ENCODE measurements at regions of chr9 and their contacts with region 1.

Region 1: DNA sequence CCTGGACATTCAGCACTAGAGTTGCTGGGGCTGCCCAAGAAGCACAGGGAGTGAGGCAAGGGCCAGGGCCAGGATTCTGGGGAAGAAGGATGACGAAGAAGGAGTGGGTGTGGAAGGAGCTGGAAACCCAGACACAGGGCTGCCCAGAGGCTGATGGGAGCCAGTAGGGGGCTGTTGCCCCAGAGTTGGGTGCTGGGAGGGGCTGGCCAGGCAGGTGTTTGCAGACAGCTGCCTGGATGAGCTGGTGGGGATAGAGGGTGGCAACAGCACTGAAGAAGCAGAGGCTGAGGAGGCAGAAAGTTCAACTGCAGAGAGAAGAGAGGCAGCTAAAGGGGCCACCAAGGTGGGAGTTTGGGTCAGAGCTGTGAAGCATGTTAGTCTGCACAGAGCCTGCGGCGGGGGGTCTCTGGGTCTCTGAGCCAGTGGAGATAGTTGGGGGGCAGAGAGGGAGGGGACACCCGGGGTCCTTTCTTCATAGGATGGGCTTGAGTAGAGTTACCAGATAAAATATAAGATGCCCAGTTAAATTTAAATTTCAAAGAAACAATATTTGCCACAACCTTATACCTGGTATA is 2.5 kb upstream of the AQP7 start:
- DNase-seq: no peak
- ATAC-seq: no peak

Region 2: GRCh38 chr9:33211695-33212393 is 193.0 kb before region 1 on chr9:
- intact Hi-C with region 1: no loop called
- DNase-seq: no peak
- ATAC-seq: peak; percentile 39

Region 3: DNA sequence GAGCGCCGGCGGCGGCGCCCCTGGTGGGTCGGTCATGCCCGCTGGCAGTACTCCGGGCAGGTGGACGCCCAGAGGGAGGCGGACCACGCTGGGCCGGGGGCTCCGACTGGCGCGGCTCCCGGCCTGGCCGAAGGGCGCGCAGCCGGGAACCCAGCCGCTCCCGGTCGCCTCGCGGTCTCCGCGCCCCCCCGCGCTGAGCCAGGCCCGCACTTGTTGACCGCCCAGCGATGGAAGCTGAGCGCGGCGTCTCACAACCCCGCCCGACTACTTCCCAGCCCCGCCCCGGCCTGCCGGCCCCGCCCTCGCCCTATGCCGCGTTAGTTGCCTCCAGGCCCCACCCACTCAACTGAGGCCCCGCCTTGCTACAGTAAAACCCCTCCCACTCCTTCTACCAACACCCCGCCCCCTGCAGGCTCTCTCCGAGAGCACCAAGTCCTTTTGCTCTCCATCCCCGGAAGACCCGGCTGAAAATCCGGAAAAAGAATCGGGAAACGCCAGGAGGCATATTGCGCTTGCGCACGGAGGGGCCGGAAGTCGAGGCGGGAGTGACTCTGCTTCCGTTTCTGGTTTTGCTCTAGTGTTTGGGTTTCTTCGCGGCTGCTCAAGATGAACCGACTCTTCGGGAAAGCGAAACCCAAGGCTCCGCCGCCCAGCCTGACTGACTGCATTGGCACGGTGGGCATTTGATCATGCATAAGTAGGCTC is 140.2 kb before region 1 on chr9 and contains the starts of genes BAG1 and CHMP5:
- intact Hi-C with region 1: no loop called
- DNase-seq: peak; percentile 100
- ATAC-seq: peak; percentile 99
- total RNA-seq, gene BAG1: 132 TPM
- total RNA-seq, gene CHMP5: 51.5 TPM

Region 4: GRCh38 chr9:33510264-33511183 is 105.6 kb after region 1 on chr9:
- intact Hi-C with region 1: loop called (anchors 2 kb)
- DNase-seq: peak; percentile 85
- ATAC-seq: peak; percentile 95

Region 5: DNA sequence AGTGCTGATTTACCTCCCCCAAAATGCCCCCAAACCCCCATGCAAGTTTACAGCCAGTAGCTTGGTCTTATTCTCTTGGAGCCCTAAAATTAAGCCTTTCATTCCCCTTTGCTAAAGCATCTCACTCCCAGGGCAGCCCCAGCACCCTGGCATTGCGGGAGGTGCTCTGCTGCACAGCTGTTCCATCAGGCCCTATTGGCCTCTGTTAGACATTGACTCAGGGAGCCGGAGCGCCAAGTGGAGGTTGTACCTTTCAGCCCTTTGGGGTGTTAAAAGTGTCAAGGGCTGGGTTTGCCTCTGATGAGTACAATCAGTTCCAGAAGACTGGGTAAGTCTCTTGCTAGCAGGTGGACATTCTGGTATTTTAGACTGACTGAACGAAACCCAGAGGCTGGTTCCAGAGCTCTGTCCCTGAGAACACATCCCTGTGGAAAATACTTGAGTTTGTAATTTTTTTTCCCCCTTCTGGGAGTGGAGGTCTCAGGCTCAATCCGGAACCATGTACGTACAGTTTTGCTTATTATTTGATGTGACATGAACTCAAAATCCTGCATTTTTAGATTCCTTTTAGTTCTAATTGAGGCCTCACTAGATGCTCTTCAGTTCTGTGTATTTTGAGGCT is 514.5 kb after region 1 on chr9:
- intact Hi-C with region 1: no loop called
- DNase-seq: no peak
- ATAC-seq: peak; percentile 41

Measured in Right ventricle myocardium inferior (tissue), 1 donor.